ENCODE measurements at regions of chr6 and their contacts with region 1.

Region 1: GRCh38 chr6:41936073-41936837 is 5.4 kb downstream of the CCND3 start:
- DNase-seq: peak; percentile 49 to 92 (median 82)

Region 2: GRCh38 chr6:41787219-41787917 is 148.9 kb before region 1 on chr6 and contains the start of gene TOMM6:
- intact Hi-C with region 1: loop called (anchors 5 kb)
- DNase-seq: peak; percentile 85 to 99 (median 96)

Region 3: GRCh38 chr6:42043787-42044475 is 107.7 kb after region 1 on chr6:
- intact Hi-C with region 1: loop called (anchors 5 kb)
- DNase-seq: peak; percentile 72 to 96 (median 92)

Region 4: GRCh38 chr6:42059743-42060142 is 123.5 kb after region 1 on chr6:
- intact Hi-C with region 1: no loop called
- DNase-seq: no peak

Measured in head of caudate nucleus (tissue), 42 donors.